ENCODE measurements at regions of chr19 and their contacts with region 1.

Region 1: GRCh38 chr19:48363810-48364563 is at the starts of genes SYNGR4 and TMEM143:
- DNase-seq: peak; percentile 100
- H3K4me3 ChIP-seq: peak within 1 kb of the TSS; percentile 64 to 85 (median 78)
- H3K4me3 Mint-ChIP-seq: peak within 1 kb of the TSS; percentile 80 to 88
- H3K27ac ChIP-seq: peak within 1 kb of the TSS; percentile 89 to 94
- H3K27ac Mint-ChIP-seq: peak within 1 kb of the TSS; percentile 86 to 93 (median 93)
- H3K4me1 ChIP-seq: peaks cover 18 to 19% of the 10 kb centered on the region in 2 donors
- H3K4me1 Mint-ChIP-seq: peaks cover 9% of the 10 kb centered on the region
- H3K27me3 ChIP-seq: no peaks in the 10 kb centered on the region
- H3K27me3 Mint-ChIP-seq: peaks cover 0 to 1% (median 0%) of the 10 kb centered on the region in 3 donors
- CTCF ChIP-seq: no peak
- polyA plus RNA-seq, gene SYNGR4: not detected
- polyA plus RNA-seq, gene TMEM143: 1.7 to 11.9 (median 2.1) TPM

Region 2: GRCh38 chr19:48391107-48391986 is 27.4 kb after region 1 on chr19 and contains the start of gene KDELR1:
- intact Hi-C with region 1: no loop called
- DNase-seq: peak; percentile 58 to 76 (median 68)
- H3K4me3 ChIP-seq: peak within 1 kb of the TSS; percentile 77 to 97 (median 92)
- H3K4me3 Mint-ChIP-seq: peak within 1 kb of the TSS; percentile 93 to 97
- H3K27ac ChIP-seq: peak within 1 kb of the TSS; percentile 74 to 89
- H3K27ac Mint-ChIP-seq: peak within 1 kb of the TSS; percentile 86 to 98 (median 93)
- H3K4me1 ChIP-seq: peaks cover 17% of the 10 kb centered on the region in 2 donors
- H3K4me1 Mint-ChIP-seq: peaks cover 12% of the 10 kb centered on the region
- H3K27me3 ChIP-seq: peaks cover 34 to 42% of the 10 kb centered on the region in 2 donors
- H3K27me3 Mint-ChIP-seq: peaks cover 44 to 49% (median 47%) of the 10 kb centered on the region in 3 donors
- CTCF ChIP-seq: peak; percentile 82
- polyA plus RNA-seq, gene KDELR1: 42.0 to 72.0 (median 51.3) TPM

Region 3: GRCh38 chr19:48468775-48469288 is 104.8 kb after region 1 on chr19:
- intact Hi-C with region 1: loop called in 1 of 2 experiments (anchors 1 kb)
- DNase-seq: peak; percentile 100
- H3K4me3 ChIP-seq: peak overlapping the region; percentile 73 to 98 (median 80)
- H3K4me3 Mint-ChIP-seq: peak overlapping the region; percentile 78 to 88
- H3K27ac ChIP-seq: peak overlapping the region in 1 of 2 donors; percentile 59
- H3K27ac Mint-ChIP-seq: peak overlapping the region; percentile 56 to 92 (median 83)
- H3K4me1 ChIP-seq: peaks cover 12 to 19% of the 10 kb centered on the region in 2 donors
- H3K4me1 Mint-ChIP-seq: peaks cover 20% of the 10 kb centered on the region
- H3K27me3 ChIP-seq: no peaks in the 10 kb centered on the region
- H3K27me3 Mint-ChIP-seq: peaks cover 1 to 3% (median 2%) of the 10 kb centered on the region in 3 donors
- CTCF ChIP-seq: no peak